ENCODE measurements at regions of chr12 and their contacts with region 1.

Region 1: GRCh38 chr12:113965951-113966797 is at the start of gene RBM19:
- DNase-seq: peak; percentile 98
- ATAC-seq: peak; percentile 98
- H3K4me3 Mint-ChIP-seq: peak within 1 kb of the TSS; percentile 99
- H3K27ac Mint-ChIP-seq: peak within 1 kb of the TSS; percentile 95
- H3K4me1 Mint-ChIP-seq: peaks cover 45% of the 10 kb centered on the region
- H3K27me3 Mint-ChIP-seq: no peaks in the 10 kb centered on the region
- total RNA-seq, gene RBM19: 29.6 to 33.8 TPM

Region 2: GRCh38 chr12:113980537-113981337 is 14.6 kb after region 1 on chr12:
- CTCF ChIA-PET with region 1: interaction called, 16 read pairs
- POLR2A ChIA-PET with region 1: interaction called, 3 read pairs
- DNase-seq: peak; percentile 47
- ATAC-seq: peak; percentile 55
- H3K4me3 Mint-ChIP-seq: no peak overlapping the region
- H3K27ac Mint-ChIP-seq: no peak overlapping the region
- H3K4me1 Mint-ChIP-seq: no peaks in the 10 kb centered on the region
- H3K27me3 Mint-ChIP-seq: peaks cover 2% of the 10 kb centered on the region